Spleen (tissue), 13 donors: ENCODE measurements at regions of chr6 and their contacts with region 1.

Region 1: DNA sequence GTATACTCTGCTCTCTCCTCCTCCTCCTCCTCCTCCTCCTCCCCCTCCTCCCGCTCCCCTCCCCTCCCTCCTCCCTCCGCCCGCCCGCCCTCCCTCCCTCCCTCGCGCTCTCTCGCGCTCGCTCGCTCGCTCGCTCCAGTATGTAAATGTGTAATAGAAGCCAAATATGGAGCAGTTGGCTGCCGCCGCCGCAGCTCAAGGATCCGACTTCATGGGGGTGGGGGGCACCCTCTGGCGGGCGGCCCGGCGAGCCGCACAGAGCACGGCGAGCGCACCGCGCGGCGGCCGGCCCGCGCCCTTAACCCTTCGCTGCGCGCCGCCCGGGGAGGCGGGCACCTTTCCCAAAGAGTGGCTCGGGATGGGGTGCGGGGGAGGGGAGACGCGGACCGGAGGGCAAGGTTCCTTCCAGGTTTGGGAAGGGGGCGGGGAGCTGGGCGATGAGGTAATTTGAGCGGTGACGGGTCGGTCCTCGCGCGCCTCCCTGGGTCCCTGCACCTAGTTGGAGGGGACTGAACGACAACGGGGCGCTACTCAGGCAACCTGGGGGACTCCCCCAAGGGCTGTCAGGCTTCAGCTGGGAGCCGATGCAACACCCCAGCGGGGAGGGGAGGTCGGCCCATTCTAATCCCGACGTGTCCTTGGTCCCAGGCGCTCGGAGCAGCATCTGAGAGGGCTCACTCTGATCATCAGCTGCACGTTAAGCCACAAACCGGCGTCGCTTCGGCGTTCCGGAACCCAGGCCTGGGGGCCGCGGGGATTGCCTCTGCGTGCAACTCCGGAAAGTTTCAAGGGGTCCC is 409 bp upstream of the ATXN1 start:
- DNase-seq: peak; percentile 96
- H3K4me3 ChIP-seq: peak overlapping the region; percentile 45 to 91 (median 75)
- H3K27ac ChIP-seq: peak overlapping the region; percentile 87 to 100 (median 99)
- H3K4me1 ChIP-seq: peaks cover 16 to 74% (median 51%) of the 10 kb centered on the region in 6 donors
- H3K27me3 ChIP-seq: no peaks in the 10 kb centered on the region
- CTCF ChIP-seq: peak in 7 of 11 experiments; percentile 4 to 54 (median 42)
- POLR2A ChIP-seq: peak in 1 of 3 donors; percentile 64

Region 2: GRCh38 chr6:16514249-16514648 is 247.4 kb before region 1 on chr6:
- intact Hi-C with region 1: loop called (anchors 5 kb)
- DNase-seq: no peak
- H3K4me3 ChIP-seq: no peak overlapping the region
- H3K27ac ChIP-seq: peak overlapping the region in 4 of 8 donors; percentile 6 to 45 (median 27)
- H3K4me1 ChIP-seq: peaks cover 24 to 71% (median 50%) of the 10 kb centered on the region in 6 donors
- H3K27me3 ChIP-seq: no peaks in the 10 kb centered on the region
- CTCF ChIP-seq: peak in 9 of 11 experiments; percentile 27 to 63 (median 48)
- POLR2A ChIP-seq: no peak

Region 3: GRCh38 chr6:16591396-16592222 is 170.1 kb before region 1 on chr6:
- intact Hi-C with region 1: no loop called
- DNase-seq: no peak
- H3K4me3 ChIP-seq: no peak overlapping the region
- H3K27ac ChIP-seq: peak overlapping the region in 7 of 8 donors; percentile 19 to 76 (median 65)
- H3K4me1 ChIP-seq: peaks cover 0 to 73% (median 25%) of the 10 kb centered on the region in 6 donors
- H3K27me3 ChIP-seq: no peaks in the 10 kb centered on the region
- CTCF ChIP-seq: no peak
- POLR2A ChIP-seq: no peak